ENCODE measurements at regions of chr16 and their contacts with region 1.

Region 1: DNA sequence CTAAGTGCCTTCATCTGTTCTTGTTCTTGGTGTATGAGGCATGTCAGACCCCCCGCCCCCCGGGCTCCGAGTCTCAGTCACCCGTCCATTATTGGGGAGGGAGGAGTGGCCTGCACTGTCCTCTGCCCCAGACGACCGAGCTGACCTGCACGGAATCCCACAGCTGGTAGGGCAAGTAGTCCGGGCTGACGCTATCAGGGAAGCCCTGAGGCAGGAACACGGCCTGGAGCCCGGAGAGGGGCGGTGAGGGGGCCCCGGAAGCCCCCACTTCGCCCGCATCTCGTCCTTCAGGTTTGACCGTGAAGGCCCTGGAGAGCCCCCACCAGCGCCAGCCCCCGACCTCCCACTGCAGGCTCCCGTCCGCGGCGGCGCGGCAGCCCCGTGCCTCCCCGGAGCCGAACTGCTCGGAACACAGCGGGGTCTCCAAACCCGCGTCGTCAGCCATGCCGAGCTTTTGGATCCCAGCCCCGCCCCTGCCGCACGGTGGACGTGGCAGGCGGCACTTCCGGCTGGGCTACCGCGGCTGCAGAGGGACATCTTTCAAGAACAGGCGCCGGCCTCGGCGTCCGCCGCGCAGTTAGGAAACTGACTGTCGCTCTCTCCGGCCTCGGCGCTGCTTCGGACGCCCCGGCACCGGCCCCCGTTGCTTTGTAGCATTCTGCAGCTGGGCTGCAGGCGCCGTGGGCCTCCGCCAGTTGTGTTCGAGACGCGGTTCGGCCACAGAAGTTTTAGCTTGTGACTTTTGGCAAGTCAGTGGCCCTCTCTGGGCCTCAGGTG is at the start of gene RUSF1:
- DNase-seq: peak; percentile 84 to 94 (median 86)
- ATAC-seq: peak; percentile 90
- H3K4me3 ChIP-seq: peak within 1 kb of the TSS; percentile 79
- H3K27ac ChIP-seq: peak within 1 kb of the TSS; percentile 92
- H3K4me1 ChIP-seq: peaks cover 10 to 24% of the 10 kb centered on the region in 2 experiments; a peak in 4 of 5 replicates
- H3K27me3 ChIP-seq: no peaks in the 10 kb centered on the region
- CTCF ChIP-seq: no peak
- EP300 ChIP-seq: peak; percentile 50
- POLR2A ChIP-seq: peak; percentile 91
- RAD21 ChIP-seq: no peak
- polyA plus RNA-seq, gene RUSF1: 0.80 to 0.89 TPM

Region 2: GRCh38 chr16:30941600-30942425 is 566.3 kb before region 1 on chr16:
- CTCF ChIA-PET with region 1: no interaction called
- POLR2A ChIA-PET with region 1: no interaction called
- in situ Hi-C with region 1: no loop called
- intact Hi-C with region 1: no loop called
- DNase-seq: peak; percentile 89 to 91 (median 90)
- ATAC-seq: peak; percentile 99
- H3K4me3 ChIP-seq: no peak overlapping the region
- H3K27ac ChIP-seq: peak overlapping the region; percentile 37
- H3K4me1 ChIP-seq: peaks cover 8 to 15% of the 10 kb centered on the region in 2 experiments; a peak in 4 of 5 replicates
- H3K27me3 ChIP-seq: no peaks in the 10 kb centered on the region
- CTCF ChIP-seq: peak; percentile 93 to 98 (median 95)
- EP300 ChIP-seq: no peak
- POLR2A ChIP-seq: no peak
- RAD21 ChIP-seq: peak; percentile 78 to 83

Region 3: DNA sequence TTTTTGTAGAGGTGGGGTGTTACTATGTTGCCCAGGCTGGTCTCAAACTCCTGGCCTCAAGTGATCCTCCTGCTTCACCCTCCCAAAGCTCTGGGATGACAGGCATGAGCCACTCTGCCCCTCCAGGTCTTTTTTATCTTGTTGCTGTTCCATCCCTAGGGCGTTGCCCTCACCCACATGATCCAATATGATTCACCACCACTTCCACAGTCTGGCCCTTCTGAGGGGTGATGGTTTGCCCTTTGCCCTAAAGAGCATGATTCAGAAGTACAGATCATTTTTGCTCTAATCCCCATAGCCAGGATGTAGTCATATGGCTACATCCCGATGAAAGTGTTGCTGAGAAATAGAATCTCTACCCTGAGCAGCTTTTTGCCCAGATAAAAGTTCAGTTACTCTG is 456.0 kb before region 1 on chr16:
- CTCF ChIA-PET with region 1: no interaction called
- POLR2A ChIA-PET with region 1: no interaction called
- in situ Hi-C with region 1: no loop called
- intact Hi-C with region 1: no loop called
- DNase-seq: peak; percentile 28 to 57 (median 35)
- ATAC-seq: peak; percentile 38
- H3K4me3 ChIP-seq: no peak overlapping the region
- H3K27ac ChIP-seq: no peak overlapping the region
- H3K4me1 ChIP-seq: peaks cover 0 to 3% of the 10 kb centered on the region in 2 experiments; a peak in 2 of 5 replicates
- H3K27me3 ChIP-seq: peaks cover 3 to 8% of the 10 kb centered on the region in 2 experiments; a peak in 3 of 5 replicates
- CTCF ChIP-seq: no peak
- EP300 ChIP-seq: 0 out of 2 replicates have a peak, but pooled peaks have one; percentile 20
- POLR2A ChIP-seq: no peak
- RAD21 ChIP-seq: no peak

Region 4: GRCh38 chr16:31487720-31488467 is 20.2 kb before region 1 on chr16:
- CTCF ChIA-PET with region 1: no interaction called
- POLR2A ChIA-PET with region 1: interaction called, 20 read pairs
- in situ Hi-C with region 1: no loop called
- intact Hi-C with region 1: no loop called
- DNase-seq: no peak
- ATAC-seq: no peak
- H3K4me3 ChIP-seq: no peak overlapping the region
- H3K27ac ChIP-seq: no peak overlapping the region
- H3K4me1 ChIP-seq: peaks cover 5 to 14% of the 10 kb centered on the region in 2 experiments; a peak in 3 of 5 replicates
- H3K27me3 ChIP-seq: no peaks in the 10 kb centered on the region
- CTCF ChIP-seq: no peak
- EP300 ChIP-seq: no peak
- POLR2A ChIP-seq: 0 out of 2 replicates have a peak, but pooled peaks have one; percentile 15
- RAD21 ChIP-seq: no peak

Region 5: DNA sequence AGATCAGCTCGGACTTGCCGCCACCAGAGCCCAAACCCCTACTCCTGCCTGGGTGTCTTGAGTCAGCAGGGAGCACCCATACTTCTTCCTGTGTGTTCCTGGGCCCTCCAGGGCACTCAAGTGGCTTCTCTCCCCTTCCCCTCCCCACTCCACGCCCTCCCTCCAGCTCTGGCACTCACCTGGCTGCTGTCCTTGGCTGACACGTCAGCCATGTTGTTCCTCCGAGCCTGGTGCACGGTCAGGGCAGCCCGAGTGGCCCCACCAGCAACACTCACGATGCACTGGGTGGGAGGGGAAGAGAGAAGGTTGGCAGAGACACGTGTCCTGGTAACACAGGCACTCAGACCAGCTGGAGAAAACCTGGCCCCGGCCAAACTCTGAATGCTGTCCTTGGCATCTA is 11.4 kb before region 1 on chr16:
- CTCF ChIA-PET with region 1: no interaction called
- POLR2A ChIA-PET with region 1: interaction called, 29 read pairs
- in situ Hi-C with region 1: no loop called
- intact Hi-C with region 1: no loop called
- DNase-seq: no peak
- ATAC-seq: no peak
- H3K4me3 ChIP-seq: no peak overlapping the region
- H3K27ac ChIP-seq: no peak overlapping the region
- H3K4me1 ChIP-seq: no peaks in the 10 kb centered on the region
- H3K27me3 ChIP-seq: no peaks in the 10 kb centered on the region
- CTCF ChIP-seq: no peak
- EP300 ChIP-seq: no peak
- POLR2A ChIP-seq: no peak
- RAD21 ChIP-seq: no peak

Region 6: GRCh38 chr16:31535737-31536136 is 27.6 kb after region 1 on chr16:
- CTCF ChIA-PET with region 1: no interaction called
- POLR2A ChIA-PET with region 1: interaction called, 10 read pairs
- in situ Hi-C with region 1: no loop called
- intact Hi-C with region 1: no loop called
- DNase-seq: peak; percentile 69 to 88 (median 80)
- ATAC-seq: peak; percentile 86
- H3K4me3 ChIP-seq: no peak overlapping the region
- H3K27ac ChIP-seq: peak overlapping the region; percentile 34; the same call in 1 of the 3 replicates
- H3K4me1 ChIP-seq: peaks cover 7 to 16% of the 10 kb centered on the region in 2 experiments; a peak in 3 of 5 replicates
- H3K27me3 ChIP-seq: no peaks in the 10 kb centered on the region
- CTCF ChIP-seq: no peak
- EP300 ChIP-seq: peak; percentile 77
- POLR2A ChIP-seq: no peak
- RAD21 ChIP-seq: no peak